GM12878 (cell line): ENCODE measurements at regions of chr10 and their contacts with region 1.

Region 1: DNA sequence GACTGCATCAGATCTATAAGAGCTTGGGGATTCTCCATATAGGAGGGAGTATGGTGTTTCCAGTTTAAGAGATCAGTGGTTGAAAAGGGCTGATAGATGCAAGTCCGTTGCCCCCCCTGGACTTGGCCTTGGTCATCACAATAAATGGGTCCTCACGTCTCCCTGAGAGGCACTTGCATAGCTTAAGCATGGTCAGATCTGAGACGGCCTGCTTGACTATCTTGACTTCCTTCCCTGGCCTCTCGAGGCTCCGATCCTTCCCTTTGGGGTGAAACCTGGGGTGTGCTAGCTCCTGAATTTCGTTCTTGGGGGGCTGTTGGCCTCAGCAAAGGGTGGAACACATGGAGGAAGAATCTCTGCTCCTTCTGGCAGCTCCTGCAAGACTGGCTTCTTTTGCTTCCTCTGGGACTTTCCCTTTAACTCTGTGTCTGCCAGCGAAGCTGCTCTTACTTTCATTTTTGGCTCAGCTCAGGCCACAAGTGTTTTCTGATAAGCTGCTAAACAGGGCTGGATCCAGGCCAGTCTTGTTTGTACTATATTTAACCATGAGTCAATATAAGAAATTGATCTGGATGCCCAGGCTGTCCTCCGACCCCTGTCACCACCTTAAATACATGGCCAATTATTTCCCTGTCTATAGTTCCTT is 11.2 kb upstream of the ZNF485 start:
- DNase-seq: peak; percentile 84
- ATAC-seq: peak; percentile 95
- H3K4me3 ChIP-seq: peak overlapping the region; percentile 38; the same call in 1 of the 2 replicates
- H3K27ac ChIP-seq: peak overlapping the region; percentile 91
- H3K4me1 ChIP-seq: peaks cover 23% of the 10 kb centered on the region
- H3K27me3 ChIP-seq: no peaks in the 10 kb centered on the region
- CTCF ChIP-seq: no peak
- EP300 ChIP-seq: 0 out of 4 replicates have a peak, but pooled peaks of 1 of the 2 experiments have one; percentile 25
- POLR2A ChIP-seq: no peak
- RAD21 ChIP-seq: 0 out of 2 replicates have a peak, but pooled peaks have one; percentile 4

Region 2: DNA sequence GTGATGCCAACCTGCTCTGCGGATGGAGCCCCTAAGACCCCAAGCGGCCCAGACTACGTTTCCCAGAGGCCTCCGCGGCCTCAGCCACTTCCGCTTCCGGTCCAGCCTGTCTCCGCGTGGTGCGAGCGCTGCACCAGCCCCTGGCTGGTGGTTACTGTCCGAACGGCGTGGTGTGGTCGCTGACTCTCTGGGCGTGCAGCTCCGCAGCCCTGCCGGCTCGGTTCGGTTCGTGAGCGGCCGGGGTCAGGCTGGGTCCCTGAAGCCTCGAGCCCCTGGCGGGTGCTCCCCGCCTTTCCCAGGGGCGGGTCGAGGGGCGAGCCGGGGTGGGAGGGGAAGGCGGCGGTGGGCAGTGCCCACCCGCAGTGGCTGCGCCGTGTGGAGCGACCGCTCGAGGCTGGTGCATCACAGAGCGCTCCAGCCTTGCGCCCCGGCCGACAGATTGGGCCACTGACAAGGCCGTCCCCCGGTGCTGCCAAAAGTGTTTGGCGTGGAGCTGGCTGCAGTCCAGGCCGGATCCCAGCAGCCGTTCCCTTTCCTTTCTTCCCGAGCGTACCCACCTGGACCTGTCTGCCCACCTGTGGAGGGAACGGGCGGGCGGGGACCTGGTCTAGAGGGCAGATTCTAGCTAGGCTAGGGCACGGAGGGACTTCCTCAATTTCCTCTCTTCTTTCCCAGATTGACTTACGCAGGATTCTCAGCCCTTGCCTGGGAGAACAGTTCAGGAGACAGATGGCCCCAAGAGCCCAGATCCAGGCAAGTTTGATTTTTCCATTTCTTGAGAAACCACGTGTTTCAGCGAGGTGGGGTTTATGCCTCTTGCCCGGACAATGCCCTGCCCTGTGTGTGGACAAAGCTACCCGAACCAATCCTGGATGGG is 11.5 kb after region 1 on chr10 and contains the start of gene ZNF485:
- CTCF ChIA-PET with region 1: interaction called, 4 read pairs
- POLR2A ChIA-PET with region 1: interaction called, 3 read pairs
- RAD21 ChIA-PET with region 1: interaction called, 5 read pairs
- SMC1A ChIA-PET with region 1: interaction called, 18 read pairs
- in situ Hi-C with region 1: no loop called
- intact Hi-C with region 1: no loop called
- DNase-seq: no peak
- ATAC-seq: peak; percentile 99
- H3K4me3 ChIP-seq: peak within 1 kb of the TSS; percentile 86
- H3K27ac ChIP-seq: peak within 1 kb of the TSS; percentile 50; the same call in 1 of the 2 replicates
- H3K4me1 ChIP-seq: no peaks in the 10 kb centered on the region; the same call in 1 of the 2 replicates
- H3K27me3 ChIP-seq: no peaks in the 10 kb centered on the region
- CTCF ChIP-seq: no peak
- EP300 ChIP-seq: no peak
- POLR2A ChIP-seq: peak; percentile 94
- RAD21 ChIP-seq: no peak
- polyA plus RNA-seq, gene ZNF485: 4.2 TPM

Region 3: GRCh38 chr10:43648398-43649184 is 53.5 kb after region 1 on chr10 and contains the start of gene ZNF32:
- CTCF ChIA-PET with region 1: interaction called, 3 read pairs
- POLR2A ChIA-PET with region 1: interaction called, 3 read pairs
- RAD21 ChIA-PET with region 1: interaction called, 4 read pairs
- SMC1A ChIA-PET with region 1: interaction called, 10 read pairs
- in situ Hi-C with region 1: no loop called
- intact Hi-C with region 1: no loop called
- DNase-seq: no peak
- ATAC-seq: peak; percentile 100
- H3K4me3 ChIP-seq: peak within 1 kb of the TSS; percentile 83
- H3K27ac ChIP-seq: peak within 1 kb of the TSS; percentile 62
- H3K4me1 ChIP-seq: no peaks in the 10 kb centered on the region
- H3K27me3 ChIP-seq: no peaks in the 10 kb centered on the region
- CTCF ChIP-seq: no peak
- EP300 ChIP-seq: no peak
- POLR2A ChIP-seq: peak; percentile 69
- RAD21 ChIP-seq: no peak
- polyA plus RNA-seq, gene ZNF32: 2.6 to 3.3 TPM

Region 4: DNA sequence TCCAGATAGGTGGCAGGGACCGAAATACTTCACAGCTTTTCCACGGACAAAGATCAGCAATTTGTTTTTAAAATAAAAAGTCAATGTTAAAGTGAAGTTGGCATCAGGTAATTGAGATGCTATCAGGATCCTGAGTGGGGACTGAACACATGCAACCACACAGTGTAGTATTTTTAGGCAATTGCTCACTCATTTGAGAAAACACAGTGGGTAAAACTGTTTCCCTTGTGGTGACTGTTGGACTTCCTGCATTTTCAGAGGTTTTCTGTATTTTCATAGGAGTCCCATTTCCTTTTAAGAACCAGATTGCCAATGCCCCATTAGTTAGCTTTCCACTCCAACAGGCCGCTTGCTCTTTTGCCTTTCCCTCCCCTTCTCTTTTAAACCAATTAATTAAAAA is 213.1 kb after region 1 on chr10:
- CTCF ChIA-PET with region 1: no interaction called
- POLR2A ChIA-PET with region 1: no interaction called
- RAD21 ChIA-PET with region 1: no interaction called
- SMC1A ChIA-PET with region 1: no interaction called
- in situ Hi-C with region 1: no loop called
- intact Hi-C with region 1: no loop called
- DNase-seq: peak; percentile 37
- ATAC-seq: peak; percentile 27; the same call in 1 of the 3 replicates
- H3K4me3 ChIP-seq: no peak overlapping the region
- H3K27ac ChIP-seq: no peak overlapping the region
- H3K4me1 ChIP-seq: no peaks in the 10 kb centered on the region
- H3K27me3 ChIP-seq: no peaks in the 10 kb centered on the region; a peak in 2 of 4 replicates
- CTCF ChIP-seq: no peak
- EP300 ChIP-seq: no peak
- POLR2A ChIP-seq: no peak
- RAD21 ChIP-seq: no peak